ENCODE measurements at regions of chr16 and their contacts with region 1.

Region 1: GRCh38 chr16:55701442-55702319 is 45.9 kb downstream of the SLC6A2 start:
- DNase-seq: no peak
- H3K4me3 ChIP-seq: no peak overlapping the region
- H3K27me3 ChIP-seq: peaks cover 5% of the 10 kb centered on the region; the same call in 1 of the 2 replicates
- CTCF ChIP-seq: peak; percentile 67

Region 2: GRCh38 chr16:54987081-54987480 is 714.6 kb before region 1 on chr16:
- CTCF ChIA-PET with region 1: no interaction called
- POLR2A ChIA-PET with region 1: no interaction called
- DNase-seq: no peak
- H3K4me3 ChIP-seq: no peak overlapping the region
- H3K27me3 ChIP-seq: no peaks in the 10 kb centered on the region
- CTCF ChIP-seq: no peak

Region 3: DNA sequence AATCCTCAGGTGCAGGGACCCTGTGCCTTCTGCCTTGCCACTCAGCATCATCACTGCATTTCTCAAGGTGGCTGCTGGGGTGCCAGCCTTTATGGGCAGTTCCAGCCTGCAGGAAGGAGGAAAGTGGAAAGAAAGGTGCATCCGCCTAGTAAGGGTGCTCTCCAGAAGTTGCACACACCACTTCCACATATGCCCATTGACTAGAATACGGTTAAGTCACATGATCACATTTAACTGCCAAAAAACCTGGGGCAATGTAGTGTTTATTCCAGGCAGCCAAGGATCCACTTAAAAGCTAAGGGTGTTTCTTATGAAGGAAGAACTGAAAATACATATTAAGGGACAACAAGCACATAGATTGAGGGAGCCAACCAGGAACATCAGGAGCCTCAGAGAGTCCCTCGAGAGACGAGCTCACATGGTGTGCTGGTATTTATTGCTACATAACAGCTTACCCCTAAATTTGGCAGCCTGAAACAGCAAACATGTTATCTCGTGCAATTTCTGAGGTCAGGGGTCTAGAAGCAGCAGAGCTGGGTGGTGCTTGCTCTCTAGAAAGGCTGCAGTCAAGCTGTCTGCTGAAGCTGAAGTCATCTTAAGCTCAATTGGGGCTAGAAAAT is 274.7 kb before region 1 on chr16:
- CTCF ChIA-PET with region 1: no interaction called
- POLR2A ChIA-PET with region 1: no interaction called
- DNase-seq: no peak
- H3K4me3 ChIP-seq: no peak overlapping the region
- H3K27me3 ChIP-seq: no peaks in the 10 kb centered on the region
- CTCF ChIP-seq: no peak

Region 4: DNA sequence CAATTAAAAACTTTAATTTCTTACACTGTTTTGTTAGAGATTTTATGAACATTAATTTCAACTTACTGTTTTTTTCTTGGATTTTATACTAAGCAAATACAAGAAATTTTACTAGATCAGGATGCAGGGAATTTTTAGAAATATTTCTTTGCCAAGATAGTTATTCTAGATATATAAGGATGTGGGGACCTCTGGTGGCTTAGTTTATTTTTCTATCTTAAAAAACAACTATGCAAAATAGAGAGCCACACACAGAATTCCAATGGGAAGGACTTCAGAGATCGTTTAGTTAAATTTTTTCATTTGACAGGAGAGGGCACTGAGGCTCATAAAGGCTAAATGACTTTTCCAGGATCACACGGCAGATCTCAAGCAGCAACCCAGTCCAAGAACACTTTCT is 158.2 kb before region 1 on chr16:
- CTCF ChIA-PET with region 1: interaction called, 59 read pairs
- POLR2A ChIA-PET with region 1: no interaction called
- DNase-seq: no peak
- H3K4me3 ChIP-seq: no peak overlapping the region
- H3K27me3 ChIP-seq: no peaks in the 10 kb centered on the region
- CTCF ChIP-seq: peak; percentile 29; the same call in 1 of the 2 replicates

Region 5: GRCh38 chr16:55672471-55672870 is 29.2 kb before region 1 on chr16:
- CTCF ChIA-PET with region 1: no interaction called
- POLR2A ChIA-PET with region 1: no interaction called
- DNase-seq: peak; percentile 9
- H3K4me3 ChIP-seq: no peak overlapping the region
- H3K27me3 ChIP-seq: peaks cover 2% of the 10 kb centered on the region; the same call in 1 of the 2 replicates
- CTCF ChIP-seq: no peak

Region 6: DNA sequence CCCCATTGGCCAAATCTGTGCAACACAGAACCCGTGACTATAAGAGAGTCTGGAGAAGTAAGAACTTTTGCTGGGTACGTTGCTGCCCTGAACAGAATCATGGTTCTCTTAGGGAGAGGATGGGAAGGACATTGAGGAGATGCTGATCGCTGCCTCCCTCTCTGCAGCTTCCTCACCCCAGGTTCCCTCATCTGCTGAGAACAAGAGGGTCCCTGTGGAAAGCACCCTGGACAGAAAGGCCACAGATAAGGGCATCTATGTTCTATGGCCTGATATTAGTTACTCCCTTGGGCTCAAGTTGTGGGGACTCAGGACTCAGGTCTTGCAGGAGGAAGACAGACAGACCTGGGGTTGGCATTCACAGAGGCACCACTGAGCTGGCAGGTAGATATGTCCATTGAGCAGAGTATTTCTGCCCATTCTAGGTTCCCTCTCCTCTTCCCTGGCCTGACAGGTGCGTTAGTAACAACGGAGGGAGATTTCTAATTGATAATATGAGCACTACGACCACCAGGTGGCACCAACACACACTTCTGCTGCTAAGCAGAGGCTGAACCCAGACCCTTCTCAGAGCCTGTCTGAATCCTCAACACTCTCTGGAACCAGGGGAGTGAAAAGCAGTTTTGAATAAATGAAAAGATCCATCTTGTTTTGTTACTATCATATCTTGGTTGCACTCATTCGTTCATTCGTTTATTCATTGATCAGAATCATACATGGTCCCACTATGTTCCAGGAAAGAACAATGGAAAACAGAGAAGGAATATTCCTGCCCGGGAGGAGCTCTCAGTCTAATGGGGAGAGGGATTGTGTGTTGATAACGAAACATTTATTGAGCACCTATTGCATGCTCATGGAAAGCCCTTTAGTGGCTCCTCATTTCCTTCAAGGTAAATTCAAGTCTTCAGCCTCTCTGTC is 10.5 kb after region 1 on chr16:
- CTCF ChIA-PET with region 1: interaction called, 11 read pairs
- POLR2A ChIA-PET with region 1: no interaction called
- DNase-seq: no peak
- H3K4me3 ChIP-seq: no peak overlapping the region
- H3K27me3 ChIP-seq: no peaks in the 10 kb centered on the region; the same call in 1 of the 2 replicates
- CTCF ChIP-seq: peak; percentile 69